ENCODE measurements at regions of chr15 and their contacts with region 1.

Region 1: DNA sequence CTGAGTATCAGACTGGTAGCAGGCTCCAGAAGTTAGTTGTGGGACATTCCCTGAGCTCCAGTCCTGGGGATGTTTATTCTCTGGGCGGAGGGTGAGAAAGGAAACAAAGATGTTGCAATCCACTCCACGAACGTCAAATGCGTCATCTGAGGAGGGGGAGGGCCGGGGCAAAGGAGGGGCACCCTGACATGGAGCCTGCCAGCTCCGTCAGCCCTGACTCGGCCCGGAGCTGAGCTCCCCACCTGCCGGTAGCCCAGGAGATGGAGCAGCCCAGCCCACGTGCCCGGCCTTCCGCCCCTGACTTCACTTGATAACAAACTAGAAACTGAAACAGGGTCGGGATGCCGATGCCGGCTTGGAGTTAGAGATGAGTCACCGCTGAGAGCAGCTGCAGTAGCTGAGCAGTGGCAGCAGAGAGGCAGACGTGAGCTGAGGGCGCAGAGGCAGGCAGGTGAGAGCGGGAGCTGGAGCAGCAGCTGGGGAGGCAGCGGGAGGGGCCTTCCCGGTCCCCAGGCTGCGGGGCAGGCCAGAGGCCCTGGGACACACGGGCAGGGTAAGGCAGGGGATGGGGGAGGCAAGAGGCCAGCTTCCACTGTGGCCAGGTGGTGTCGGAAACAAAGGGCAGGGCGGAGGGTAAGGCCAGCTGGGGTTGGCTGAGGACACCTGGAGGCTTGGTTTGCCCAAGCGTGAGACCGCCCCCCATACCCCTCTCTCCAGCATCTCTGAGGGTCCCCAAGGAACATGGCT is at the start of gene ISG20:
- DNase-seq: peak; percentile 97
- H3K4me3 ChIP-seq: peak within 1 kb of the TSS; percentile 81
- H3K27ac ChIP-seq: peak within 1 kb of the TSS; percentile 97
- H3K4me1 ChIP-seq: peaks cover 89% of the 10 kb centered on the region
- CTCF ChIP-seq: peak; percentile 60
- total RNA-seq, gene ISG20: 345 and 502 TPM in 2 replicates

Region 2: DNA sequence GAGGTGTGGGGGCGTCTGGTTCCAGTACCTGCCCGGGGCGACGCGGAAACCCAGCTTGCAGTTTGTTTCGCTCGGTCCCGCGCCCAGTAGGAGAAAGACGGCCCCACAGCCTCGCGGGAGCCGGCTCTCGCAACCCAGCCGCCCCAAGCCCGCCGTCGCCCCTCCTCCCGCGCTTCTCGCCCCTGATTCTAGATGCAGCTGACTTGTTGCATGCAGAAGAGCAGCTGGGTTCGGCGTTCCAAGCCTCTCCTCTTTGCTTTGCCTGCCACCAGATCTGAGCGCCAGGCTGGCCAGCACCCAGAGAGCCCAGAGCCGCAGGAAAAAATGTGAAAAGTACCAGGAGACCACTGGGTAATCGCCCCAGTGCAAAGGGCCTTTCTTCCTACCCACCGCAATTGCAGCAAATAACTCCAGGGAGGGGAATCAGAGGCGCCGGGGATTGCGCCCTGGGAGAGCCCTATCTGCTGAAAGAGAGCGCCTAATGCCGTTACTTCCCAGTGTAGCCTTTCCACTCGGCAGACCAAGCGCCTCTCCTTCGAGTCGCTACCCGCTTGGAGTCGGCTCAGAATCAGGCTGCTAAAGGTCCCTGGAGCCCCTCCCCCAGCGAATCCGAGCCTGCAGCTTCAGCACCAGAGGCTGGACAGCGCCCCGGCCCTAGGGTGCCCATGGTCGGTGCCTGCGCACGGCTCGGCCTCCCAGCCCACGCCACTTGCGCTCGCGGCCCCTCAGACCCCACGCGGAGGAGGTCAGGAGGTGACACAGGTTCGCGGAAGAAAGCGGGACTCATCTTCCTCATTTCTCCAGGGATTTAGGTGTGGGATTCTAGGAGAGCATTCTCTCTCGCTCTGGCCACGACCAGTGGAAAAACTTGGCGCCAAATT is 33.4 kb before region 1 on chr15:
- CTCF ChIA-PET with region 1: no interaction called
- POLR2A ChIA-PET with region 1: no interaction called
- intact Hi-C with region 1: no loop called
- DNase-seq: no peak
- H3K4me3 ChIP-seq: no peak overlapping the region
- H3K27ac ChIP-seq: no peak overlapping the region
- H3K4me1 ChIP-seq: peaks cover 4% of the 10 kb centered on the region
- CTCF ChIP-seq: no peak

Region 3: GRCh38 chr15:88657326-88658069 is 18.7 kb after region 1 on chr15:
- CTCF ChIA-PET with region 1: no interaction called
- POLR2A ChIA-PET with region 1: interaction called, 11 read pairs
- intact Hi-C with region 1: loop called (anchors 1 kb)
- DNase-seq: no peak
- H3K4me3 ChIP-seq: peak overlapping the region; percentile 8
- H3K27ac ChIP-seq: peak overlapping the region; percentile 86
- H3K4me1 ChIP-seq: peaks cover 33% of the 10 kb centered on the region
- CTCF ChIP-seq: peak; percentile 60